Activated naive CD4-positive, alpha-beta T cell treated with anti-CD3 and anti-CD28 coated beads for 36 hours (primary cell): ENCODE measurements at regions of chr12 and their contacts with region 1.

Region 1: GRCh38 chr12:57238854-57239554 is 9.5 kb downstream of the SHMT2 start:
- DNase-seq: peak; percentile 91
- H3K4me3 Mint-ChIP-seq: peak overlapping the region; percentile 93
- H3K27ac Mint-ChIP-seq: peak overlapping the region; percentile 66
- H3K4me1 Mint-ChIP-seq: peaks cover 66% of the 10 kb centered on the region
- H3K27me3 Mint-ChIP-seq: peaks cover 50% of the 10 kb centered on the region

Region 2: DNA sequence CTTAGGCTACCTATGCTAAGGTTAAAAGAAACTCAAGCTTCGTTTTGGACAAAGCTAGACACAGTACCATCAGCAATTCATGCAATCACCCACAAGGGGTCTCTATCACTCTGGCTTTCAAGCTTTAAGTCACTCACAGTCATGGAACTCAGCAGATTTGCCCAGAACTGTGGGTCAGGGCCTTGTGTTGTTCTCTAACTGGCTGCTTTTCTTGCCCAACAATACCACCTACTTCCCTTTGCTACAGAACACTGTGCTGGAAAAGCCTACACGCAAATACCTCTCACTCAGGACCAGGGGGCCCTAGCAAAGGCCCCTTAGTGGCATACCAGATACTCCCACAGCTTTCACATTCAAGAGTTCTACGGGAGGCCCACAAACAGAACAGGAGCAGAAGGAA is 169.5 kb before region 1 on chr12:
- CTCF ChIA-PET with region 1: no interaction called
- intact Hi-C with region 1: loop called (anchors 5 kb)
- DNase-seq: peak; percentile 76
- H3K4me3 Mint-ChIP-seq: peak overlapping the region; percentile 23
- H3K27ac Mint-ChIP-seq: peak overlapping the region; percentile 93
- H3K4me1 Mint-ChIP-seq: peaks cover 71% of the 10 kb centered on the region
- H3K27me3 Mint-ChIP-seq: no peaks in the 10 kb centered on the region

Region 3: DNA sequence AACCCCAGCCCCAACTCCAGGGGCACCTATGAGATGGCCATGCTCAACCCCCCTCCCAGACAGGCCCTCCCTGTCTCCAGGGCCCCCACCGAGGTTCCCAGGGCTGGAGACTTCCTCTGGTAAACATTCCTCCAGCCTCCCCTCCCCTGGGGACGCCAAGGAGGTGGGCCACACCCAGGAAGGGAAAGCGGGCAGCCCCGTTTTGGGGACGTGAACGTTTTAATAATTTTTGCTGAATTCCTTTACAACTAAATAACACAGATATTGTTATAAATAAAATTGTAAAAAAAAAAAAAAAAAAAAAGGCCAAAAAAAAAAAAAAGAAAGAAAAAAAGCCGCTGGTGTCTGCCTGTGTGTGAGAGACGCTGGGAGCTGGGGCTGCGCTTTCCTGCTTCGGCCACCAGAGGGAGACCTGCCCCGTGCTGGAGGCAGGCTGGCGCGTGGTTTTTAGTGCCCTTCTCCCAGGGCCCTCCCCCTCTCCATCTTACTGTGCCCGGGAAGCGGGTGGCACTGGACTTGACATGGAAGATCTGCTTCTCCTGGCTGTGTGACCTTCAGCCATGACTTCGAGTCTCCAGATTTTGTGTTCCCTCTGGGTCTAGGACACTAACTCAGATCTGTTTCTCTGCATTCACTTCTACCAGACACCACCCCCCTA is 25.8 kb before region 1 on chr12:
- CTCF ChIA-PET with region 1: interaction called, 333 read pairs
- intact Hi-C with region 1: loop called (anchors 1 kb)
- DNase-seq: peak; percentile 92
- H3K4me3 Mint-ChIP-seq: no peak overlapping the region
- H3K27ac Mint-ChIP-seq: no peak overlapping the region
- H3K4me1 Mint-ChIP-seq: peaks cover 28% of the 10 kb centered on the region
- H3K27me3 Mint-ChIP-seq: peaks cover 39% of the 10 kb centered on the region

Region 4: DNA sequence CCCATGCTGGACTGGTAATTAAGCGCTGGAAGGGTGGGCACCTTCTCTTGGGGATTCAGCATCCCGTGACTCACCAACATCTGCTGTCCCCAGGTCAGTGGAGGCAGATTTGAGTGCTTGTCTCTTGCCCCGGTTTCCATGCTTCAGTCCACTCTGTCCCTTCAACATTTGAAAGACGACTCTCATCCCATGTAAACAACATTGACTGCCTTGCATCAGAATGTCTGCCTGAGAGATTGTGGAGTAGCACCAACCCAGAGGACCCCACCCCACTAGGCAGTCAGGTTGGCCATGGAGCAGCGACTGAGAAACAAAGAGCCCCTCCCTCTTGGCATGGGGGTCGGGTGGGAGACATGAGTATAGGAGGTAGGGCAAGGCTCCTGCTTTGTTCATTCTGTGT is 16.9 kb after region 1 on chr12:
- CTCF ChIA-PET with region 1: interaction called, 24 read pairs
- intact Hi-C with region 1: no loop called
- DNase-seq: no peak
- H3K4me3 Mint-ChIP-seq: no peak overlapping the region
- H3K27ac Mint-ChIP-seq: no peak overlapping the region
- H3K4me1 Mint-ChIP-seq: no peaks in the 10 kb centered on the region
- H3K27me3 Mint-ChIP-seq: no peaks in the 10 kb centered on the region

Region 5: GRCh38 chr12:57280211-57281062 is 41.4 kb after region 1 on chr12:
- CTCF ChIA-PET with region 1: interaction called, 13 read pairs
- intact Hi-C with region 1: loop called (anchors 2 kb)
- DNase-seq: peak; percentile 90
- H3K4me3 Mint-ChIP-seq: peak overlapping the region; percentile 46
- H3K27ac Mint-ChIP-seq: peak overlapping the region; percentile 90
- H3K4me1 Mint-ChIP-seq: peaks cover 28% of the 10 kb centered on the region
- H3K27me3 Mint-ChIP-seq: no peaks in the 10 kb centered on the region

Region 6: GRCh38 chr12:57744777-57745484 is 505.9 kb after region 1 on chr12 and contains the start of gene TSPAN31:
- CTCF ChIA-PET with region 1: no interaction called
- intact Hi-C with region 1: loop called (anchors 5 kb)
- DNase-seq: peak; percentile 99
- H3K4me3 Mint-ChIP-seq: peak within 1 kb of the TSS; percentile 85
- H3K27ac Mint-ChIP-seq: peak within 1 kb of the TSS; percentile 94
- H3K4me1 Mint-ChIP-seq: peaks cover 40% of the 10 kb centered on the region
- H3K27me3 Mint-ChIP-seq: no peaks in the 10 kb centered on the region
- total RNA-seq, gene TSPAN31: 6.4 to 7.7 TPM